Esophagus squamous epithelium (tissue), 5 donors: ENCODE measurements at regions of chr5 and their contacts with region 1.

Region 1: GRCh38 chr5:151002250-151002649 is 18.1 kb upstream of the GPX3 start:
- DNase-seq: no peak
- H3K4me3 ChIP-seq: no peak overlapping the region
- H3K27ac ChIP-seq: no peak overlapping the region
- H3K4me1 ChIP-seq: peaks cover 2 to 60% (median 27%) of the 10 kb centered on the region in 3 donors
- H3K27me3 ChIP-seq: no peaks in the 10 kb centered on the region
- CTCF ChIP-seq: peak in 5 of 6 experiments; percentile 65 to 80 (median 68)
- POLR2A ChIP-seq: no peak

Region 2: DNA sequence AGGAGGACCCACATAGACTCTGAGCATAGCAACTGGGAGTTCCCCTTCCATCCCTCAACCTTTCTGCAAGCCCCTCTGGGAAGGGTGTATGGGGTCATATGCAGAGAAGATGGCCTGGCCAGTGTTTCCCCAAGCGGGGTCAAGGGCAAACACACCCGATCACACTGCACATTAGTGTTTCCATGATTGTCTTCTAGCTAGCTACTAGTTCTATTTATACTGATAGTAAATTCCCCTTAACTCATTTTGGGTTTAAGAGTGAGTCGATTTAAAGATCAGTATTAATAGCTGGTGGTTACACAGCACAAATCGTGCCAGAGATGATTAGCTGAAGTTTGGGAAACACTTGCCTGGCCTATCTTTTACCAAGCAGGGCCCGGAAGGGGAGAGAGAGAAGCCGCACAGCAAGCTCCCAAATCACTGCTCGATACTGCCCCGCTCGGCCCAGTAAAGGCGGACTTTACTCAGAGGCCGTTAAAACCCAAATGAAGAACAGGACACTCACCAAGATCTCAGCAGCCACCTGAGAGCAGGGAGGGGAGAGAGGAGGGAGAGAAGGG is 108.0 kb after region 1 on chr5:
- intact Hi-C with region 1: loop called (anchors 5 kb)
- DNase-seq: no peak
- H3K4me3 ChIP-seq: no peak overlapping the region
- H3K27ac ChIP-seq: no peak overlapping the region
- H3K4me1 ChIP-seq: peaks cover 0 to 50% (median 19%) of the 10 kb centered on the region in 3 donors
- H3K27me3 ChIP-seq: no peaks in the 10 kb centered on the region
- CTCF ChIP-seq: no peak
- POLR2A ChIP-seq: no peak